Natural killer cell (primary cell): ENCODE measurements at regions of chr15 and their contacts with region 1.

Region 1: DNA sequence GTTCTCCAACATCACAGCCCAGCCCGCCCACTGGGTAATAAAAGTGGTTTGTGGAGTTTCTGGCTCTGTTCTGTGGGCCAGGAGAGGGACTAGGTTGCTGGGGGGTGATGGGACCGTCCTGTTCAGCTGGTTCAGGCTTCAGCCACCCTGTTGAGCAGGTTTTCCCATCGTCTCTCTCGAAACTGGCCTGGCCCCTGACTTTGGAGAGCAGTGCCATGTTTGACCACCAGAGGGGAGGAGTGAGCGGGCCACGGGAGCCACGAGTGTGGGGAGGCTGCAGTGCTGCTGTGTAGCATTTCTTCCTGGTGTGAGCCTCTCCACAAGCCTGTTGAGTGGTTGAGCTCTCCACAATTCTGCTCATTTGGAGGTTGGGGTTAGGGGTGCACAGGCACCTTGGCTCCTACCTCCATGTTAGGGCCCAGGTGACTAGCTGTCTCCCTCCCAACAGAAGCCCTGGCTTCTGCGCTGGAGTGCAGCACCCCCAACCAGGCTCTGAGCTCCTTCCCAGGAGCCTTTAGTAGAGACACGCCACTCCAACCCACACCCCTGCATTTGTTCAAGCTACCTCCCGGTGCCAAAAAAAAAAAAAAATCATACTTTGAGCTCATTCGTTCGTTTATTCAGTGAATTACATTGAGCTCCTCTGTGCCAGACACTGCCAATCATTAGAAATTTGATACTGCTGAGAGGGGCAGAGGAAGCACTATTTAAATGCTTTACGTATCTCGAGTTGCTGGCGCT is 13.9 kb downstream of the SPINT1 start:
- DNase-seq: peak; percentile 76 to 87
- ATAC-seq: peak; percentile 91 to 99 (median 94)
- H3K4me3 ChIP-seq: no peak overlapping the region
- H3K4me3 Mint-ChIP-seq: no peak overlapping the region
- H3K27ac ChIP-seq: no peak overlapping the region
- H3K27ac Mint-ChIP-seq: peak overlapping the region in 1 of 2 donors; percentile 44
- H3K4me1 ChIP-seq: peaks cover 18% of the 10 kb centered on the region
- H3K4me1 Mint-ChIP-seq: peaks cover 0 to 6% of the 10 kb centered on the region in 2 donors
- H3K27me3 ChIP-seq: no peaks in the 10 kb centered on the region
- H3K27me3 Mint-ChIP-seq: peaks cover 11 to 15% of the 10 kb centered on the region in 2 donors
- CTCF ChIP-seq: peak; percentile 84

Region 2: GRCh38 chr15:41022487-41023090 is 164.8 kb after region 1 on chr15:
- intact Hi-C with region 1: loop called (anchors 5 kb)
- DNase-seq: peak in 1 of 2 donors; percentile 70
- ATAC-seq: peak; percentile 64 to 80 (median 67)
- H3K4me3 ChIP-seq: no peak overlapping the region
- H3K4me3 Mint-ChIP-seq: no peak overlapping the region
- H3K27ac ChIP-seq: no peak overlapping the region
- H3K27ac Mint-ChIP-seq: no peak overlapping the region
- H3K4me1 ChIP-seq: no peaks in the 10 kb centered on the region
- H3K4me1 Mint-ChIP-seq: peaks cover 0 to 3% of the 10 kb centered on the region in 2 donors
- H3K27me3 ChIP-seq: no peaks in the 10 kb centered on the region
- H3K27me3 Mint-ChIP-seq: no peaks in the 10 kb centered on the region
- CTCF ChIP-seq: peak; percentile 63

Region 3: DNA sequence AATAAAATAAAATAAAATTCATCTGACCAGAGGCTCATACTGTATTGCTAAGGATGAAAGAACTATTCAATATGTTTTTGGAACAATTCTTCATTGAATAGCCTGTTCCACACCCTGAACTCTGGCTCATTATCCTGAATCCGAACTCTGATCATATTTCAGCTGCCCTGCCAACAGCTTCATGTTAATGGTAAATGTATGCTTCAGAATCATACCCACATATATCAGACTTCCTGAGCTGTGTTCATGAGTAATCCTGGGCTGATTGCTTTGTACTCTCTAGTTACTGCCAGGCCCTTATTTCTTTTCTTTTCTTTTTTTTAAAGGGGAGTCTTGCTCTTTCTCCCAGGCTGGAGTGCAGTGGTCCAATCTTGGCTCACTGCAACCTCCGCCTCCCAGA is 246.5 kb after region 1 on chr15:
- intact Hi-C with region 1: no loop called
- DNase-seq: no peak
- ATAC-seq: no peak
- H3K4me3 ChIP-seq: no peak overlapping the region
- H3K4me3 Mint-ChIP-seq: no peak overlapping the region
- H3K27ac ChIP-seq: no peak overlapping the region
- H3K27ac Mint-ChIP-seq: no peak overlapping the region
- H3K4me1 ChIP-seq: no peaks in the 10 kb centered on the region
- H3K4me1 Mint-ChIP-seq: peaks cover 31 to 40% of the 10 kb centered on the region in 2 donors
- H3K27me3 ChIP-seq: no peaks in the 10 kb centered on the region
- H3K27me3 Mint-ChIP-seq: no peaks in the 10 kb centered on the region
- CTCF ChIP-seq: no peak

Region 4: GRCh38 chr15:41180206-41180789 is 322.5 kb after region 1 on chr15:
- intact Hi-C with region 1: loop called (anchors 5 kb)
- DNase-seq: no peak
- ATAC-seq: no peak
- H3K4me3 ChIP-seq: no peak overlapping the region
- H3K4me3 Mint-ChIP-seq: no peak overlapping the region
- H3K27ac ChIP-seq: no peak overlapping the region
- H3K27ac Mint-ChIP-seq: no peak overlapping the region
- H3K4me1 ChIP-seq: no peaks in the 10 kb centered on the region
- H3K4me1 Mint-ChIP-seq: no peaks in the 10 kb centered on the region
- H3K27me3 ChIP-seq: no peaks in the 10 kb centered on the region
- H3K27me3 Mint-ChIP-seq: peaks cover 0 to 2% of the 10 kb centered on the region in 2 donors
- CTCF ChIP-seq: no peak